ENCODE measurements at regions of chrX and their contacts with region 1.

Region 1: GRCh38 chrX:153953342-153953830 is 8.9 kb upstream of the RENBP start:
- DNase-seq: peak; percentile 92
- H3K4me3 ChIP-seq: peak overlapping the region; percentile 33 to 45 (median 42)
- H3K27ac ChIP-seq: peak overlapping the region; percentile 82 to 88 (median 85)
- H3K4me1 ChIP-seq: peaks cover 12 to 73% (median 65%) of the 10 kb centered on the region in 4 donors
- H3K27me3 ChIP-seq: no peaks in the 10 kb centered on the region
- CTCF ChIP-seq: peak; percentile 97 to 99 (median 97)
- EP300 ChIP-seq: no peak
- POLR2A ChIP-seq: no peak

Region 2: GRCh38 chrX:153560000-153560399 is 393.4 kb before region 1 on chrX:
- intact Hi-C with region 1: no loop called
- DNase-seq: no peak
- H3K4me3 ChIP-seq: no peak overlapping the region
- H3K27ac ChIP-seq: no peak overlapping the region
- H3K4me1 ChIP-seq: peaks cover 0 to 3% (median 1%) of the 10 kb centered on the region in 4 donors
- H3K27me3 ChIP-seq: no peaks in the 10 kb centered on the region
- CTCF ChIP-seq: no peak
- EP300 ChIP-seq: no peak
- POLR2A ChIP-seq: no peak

Region 3: DNA sequence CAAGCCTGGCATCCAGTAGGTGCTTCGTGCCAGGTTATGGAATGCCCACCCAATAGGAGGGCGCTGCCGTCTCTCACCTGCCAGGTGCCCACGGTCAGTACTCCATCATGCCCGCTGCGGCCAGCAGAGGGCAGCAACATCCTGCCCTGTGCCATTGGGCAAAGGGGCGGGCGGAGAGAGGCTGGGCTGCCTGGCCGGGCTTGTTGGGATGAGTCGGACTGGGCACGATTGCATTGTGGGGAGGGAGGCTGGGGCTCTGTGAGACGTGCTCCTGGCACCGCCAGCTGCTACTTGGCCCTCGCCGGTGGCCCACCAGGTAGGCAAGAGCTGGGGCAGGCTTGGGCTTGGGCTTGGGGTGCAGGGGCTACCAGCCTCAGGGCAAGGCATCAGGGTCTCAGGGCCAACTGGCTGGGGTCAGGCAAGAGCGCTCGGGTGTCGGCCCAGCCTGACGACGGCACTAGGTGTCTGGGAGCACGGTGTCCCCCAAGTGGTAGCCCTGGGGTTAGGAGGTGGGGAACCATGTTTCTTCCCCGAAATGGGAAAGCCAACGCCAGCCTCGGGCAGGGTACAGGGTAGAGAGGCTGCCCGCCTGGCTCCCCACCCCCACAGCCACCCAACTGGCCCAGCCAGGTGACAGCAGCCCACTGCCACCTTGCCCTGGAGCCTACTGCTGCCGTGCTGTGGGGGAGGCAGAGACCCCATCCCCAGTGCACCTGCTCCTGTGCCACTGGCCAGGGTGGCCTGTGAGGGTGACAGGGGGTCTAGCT is 189.2 kb before region 1 on chrX and contains the start of gene PLXNB3:
- intact Hi-C with region 1: loop called (anchors 2 kb)
- DNase-seq: peak; percentile 92
- H3K4me3 ChIP-seq: peak within 1 kb of the TSS; percentile 43 to 56 (median 49)
- H3K27ac ChIP-seq: peak within 1 kb of the TSS; percentile 70 to 79 (median 76)
- H3K4me1 ChIP-seq: peaks cover 19 to 40% (median 36%) of the 10 kb centered on the region in 4 donors
- H3K27me3 ChIP-seq: no peaks in the 10 kb centered on the region
- CTCF ChIP-seq: peak; percentile 79 to 89 (median 81)
- EP300 ChIP-seq: no peak
- POLR2A ChIP-seq: no peak
- total RNA-seq, gene PLXNB3: 6.1 to 21.9 (median 17.6) TPM

Measured in esophagus muscularis mucosa (tissue), 4 donors.